ENCODE measurements at regions of chr10 and their contacts with region 1.

Region 1: DNA sequence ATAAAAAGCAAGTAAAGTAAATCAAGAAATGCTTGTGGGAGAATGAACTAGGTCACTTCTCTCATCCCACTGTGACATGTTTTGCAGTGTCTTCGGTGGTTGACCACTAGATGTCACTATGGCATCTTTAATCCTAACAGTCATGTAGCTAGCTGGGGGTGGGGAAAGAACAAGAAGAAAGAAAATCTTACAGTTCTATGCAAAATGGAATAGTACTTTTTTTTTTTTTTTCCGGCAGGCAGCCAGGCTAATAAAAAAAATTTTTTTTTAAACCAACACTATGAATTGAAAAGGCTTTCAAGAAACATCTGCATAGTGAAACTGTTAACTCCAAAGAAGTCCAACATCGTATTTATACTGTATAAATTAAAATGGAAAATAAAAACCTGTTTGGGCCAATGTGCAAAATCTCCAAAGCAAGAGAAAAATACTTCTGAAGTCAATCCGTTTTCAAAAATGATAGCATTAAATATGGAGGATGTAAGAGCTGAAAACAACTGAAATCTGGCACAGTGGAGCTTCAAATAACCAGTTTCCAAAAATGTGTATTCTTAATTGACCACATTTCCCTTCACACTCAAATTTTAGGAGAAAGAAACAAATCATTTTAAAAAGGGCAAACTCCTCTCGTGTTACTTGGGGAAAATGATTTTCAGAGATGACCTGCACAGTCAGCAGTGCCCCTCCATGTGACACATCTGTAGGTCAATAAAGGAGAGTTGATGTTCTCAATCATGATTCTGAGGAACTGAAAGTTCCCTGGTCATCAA is 38.5 kb downstream of the CDK1 start:
- DNase-seq: peak in 4 of 9 experiments; percentile 11 to 71 (median 36)
- ATAC-seq: peak; percentile 55
- H3K4me3 ChIP-seq: no peak overlapping the region
- H3K4me3 Mint-ChIP-seq: no peak overlapping the region
- H3K27ac ChIP-seq: no peak overlapping the region
- H3K27ac Mint-ChIP-seq: no peak overlapping the region
- H3K4me1 ChIP-seq: no peaks in the 10 kb centered on the region
- H3K4me1 Mint-ChIP-seq: no peaks in the 10 kb centered on the region
- H3K27me3 ChIP-seq: no peaks in the 10 kb centered on the region
- H3K27me3 Mint-ChIP-seq: no peaks in the 10 kb centered on the region
- CTCF ChIP-seq: peak; percentile 68

Region 2: DNA sequence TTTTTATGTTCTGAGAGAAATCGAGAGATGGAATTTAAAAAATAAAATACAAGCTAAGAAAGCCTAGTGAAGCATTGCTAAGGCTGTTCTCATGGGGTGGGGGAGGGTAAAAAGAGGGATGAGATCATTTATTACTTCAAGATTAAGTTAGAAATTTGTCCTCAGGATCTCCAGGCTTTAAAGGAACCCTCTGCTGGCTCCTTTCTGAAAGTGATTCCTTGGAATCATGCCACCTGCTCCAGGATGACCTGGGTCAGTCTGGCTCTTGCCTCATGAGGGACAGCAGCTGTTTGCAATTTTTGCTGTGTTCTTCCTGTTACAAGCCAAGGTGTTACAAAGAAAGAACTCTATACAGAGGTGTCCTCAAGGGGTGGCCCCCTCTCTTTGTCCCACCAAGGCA is 31.3 kb after region 1 on chr10:
- CTCF ChIA-PET with region 1: no interaction called
- POLR2A ChIA-PET with region 1: no interaction called
- intact Hi-C with region 1: no loop called
- DNase-seq: no peak
- ATAC-seq: no peak
- H3K4me3 ChIP-seq: no peak overlapping the region
- H3K4me3 Mint-ChIP-seq: no peak overlapping the region
- H3K27ac ChIP-seq: no peak overlapping the region
- H3K27ac Mint-ChIP-seq: no peak overlapping the region
- H3K4me1 ChIP-seq: no peaks in the 10 kb centered on the region
- H3K4me1 Mint-ChIP-seq: no peaks in the 10 kb centered on the region
- H3K27me3 ChIP-seq: no peaks in the 10 kb centered on the region
- H3K27me3 Mint-ChIP-seq: no peaks in the 10 kb centered on the region
- CTCF ChIP-seq: no peak

Region 3: DNA sequence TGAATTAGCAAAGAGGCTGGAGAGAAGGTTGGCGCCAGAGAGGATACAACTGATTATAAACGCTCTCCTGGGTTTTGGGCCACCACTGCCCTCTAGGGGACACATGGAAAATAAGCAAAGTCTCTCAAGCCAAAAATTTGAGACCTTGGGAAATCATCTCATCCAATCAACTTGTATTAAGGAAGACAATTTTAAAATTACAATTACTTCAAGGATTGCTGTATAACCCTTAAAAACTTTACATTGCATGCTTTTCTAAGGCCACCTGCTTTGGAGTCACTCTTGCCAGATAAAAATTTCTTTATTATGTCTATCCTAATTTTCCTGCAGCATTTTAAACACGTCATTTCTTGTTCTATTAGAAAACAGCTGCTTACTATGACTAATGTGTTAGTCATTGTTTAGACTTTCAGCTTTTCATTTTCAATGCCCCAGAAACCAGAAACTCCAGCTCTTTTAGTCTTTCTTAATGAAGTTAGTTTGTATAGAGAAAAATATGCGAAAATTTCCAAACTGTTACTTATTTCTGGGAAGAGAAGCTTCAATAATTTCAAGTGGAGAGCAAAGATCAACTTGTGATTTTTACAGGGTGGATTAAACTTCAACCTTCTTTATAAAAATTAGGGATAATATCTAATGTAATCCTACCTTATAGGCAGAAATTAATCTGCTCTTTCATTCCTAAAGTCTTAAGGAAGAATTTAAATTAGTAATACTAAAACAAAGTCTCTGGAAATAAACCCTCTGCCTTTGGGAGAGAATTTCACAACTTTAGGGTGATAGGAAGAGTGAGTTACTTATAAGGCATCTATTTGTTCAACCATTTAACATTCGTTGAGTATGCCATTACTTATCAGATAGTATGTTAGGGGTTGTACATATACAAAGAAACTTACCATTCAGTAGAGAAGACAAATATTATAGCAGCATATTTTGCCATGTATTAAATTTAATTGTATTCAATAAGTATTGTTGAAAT is 147.7 kb after region 1 on chr10:
- CTCF ChIA-PET with region 1: interaction called, 3 read pairs
- POLR2A ChIA-PET with region 1: no interaction called
- intact Hi-C with region 1: loop called (anchors 1 to 2 kb)
- DNase-seq: peak in 6 of 9 experiments; percentile 20 to 60 (median 40)
- ATAC-seq: peak; percentile 51
- H3K4me3 ChIP-seq: no peak overlapping the region
- H3K4me3 Mint-ChIP-seq: no peak overlapping the region
- H3K27ac ChIP-seq: no peak overlapping the region
- H3K27ac Mint-ChIP-seq: no peak overlapping the region
- H3K4me1 ChIP-seq: no peaks in the 10 kb centered on the region
- H3K4me1 Mint-ChIP-seq: no peaks in the 10 kb centered on the region
- H3K27me3 ChIP-seq: no peaks in the 10 kb centered on the region
- H3K27me3 Mint-ChIP-seq: peaks cover 9% of the 10 kb centered on the region
- CTCF ChIP-seq: peak; percentile 65

Region 4: DNA sequence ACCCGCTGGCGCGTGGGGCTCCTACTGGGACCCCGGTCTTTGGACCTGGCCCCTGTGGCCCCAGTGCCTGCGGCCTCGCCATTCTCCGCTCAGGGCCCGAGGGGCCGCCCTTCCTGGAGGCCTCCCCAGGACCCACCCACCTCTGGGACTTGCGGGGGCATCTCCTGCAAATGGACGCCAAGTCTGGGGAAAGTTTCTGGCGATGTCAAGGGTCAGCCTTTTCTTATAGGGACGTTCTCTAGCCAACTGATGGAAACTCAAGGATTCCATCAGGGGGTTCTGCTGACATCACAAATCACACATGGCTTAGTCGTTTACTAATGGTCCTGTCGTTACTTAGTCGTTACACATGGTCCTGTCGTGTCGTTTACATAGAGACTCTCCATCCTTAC is 184.9 kb after region 1 on chr10:
- CTCF ChIA-PET with region 1: no interaction called
- POLR2A ChIA-PET with region 1: no interaction called
- intact Hi-C with region 1: no loop called
- DNase-seq: no peak
- ATAC-seq: no peak
- H3K4me3 ChIP-seq: no peak overlapping the region
- H3K4me3 Mint-ChIP-seq: no peak overlapping the region
- H3K27ac ChIP-seq: no peak overlapping the region
- H3K27ac Mint-ChIP-seq: no peak overlapping the region
- H3K4me1 ChIP-seq: no peaks in the 10 kb centered on the region
- H3K4me1 Mint-ChIP-seq: peaks cover 5% of the 10 kb centered on the region
- H3K27me3 ChIP-seq: no peaks in the 10 kb centered on the region
- H3K27me3 Mint-ChIP-seq: peaks cover 42% of the 10 kb centered on the region
- CTCF ChIP-seq: no peak

Region 5: DNA sequence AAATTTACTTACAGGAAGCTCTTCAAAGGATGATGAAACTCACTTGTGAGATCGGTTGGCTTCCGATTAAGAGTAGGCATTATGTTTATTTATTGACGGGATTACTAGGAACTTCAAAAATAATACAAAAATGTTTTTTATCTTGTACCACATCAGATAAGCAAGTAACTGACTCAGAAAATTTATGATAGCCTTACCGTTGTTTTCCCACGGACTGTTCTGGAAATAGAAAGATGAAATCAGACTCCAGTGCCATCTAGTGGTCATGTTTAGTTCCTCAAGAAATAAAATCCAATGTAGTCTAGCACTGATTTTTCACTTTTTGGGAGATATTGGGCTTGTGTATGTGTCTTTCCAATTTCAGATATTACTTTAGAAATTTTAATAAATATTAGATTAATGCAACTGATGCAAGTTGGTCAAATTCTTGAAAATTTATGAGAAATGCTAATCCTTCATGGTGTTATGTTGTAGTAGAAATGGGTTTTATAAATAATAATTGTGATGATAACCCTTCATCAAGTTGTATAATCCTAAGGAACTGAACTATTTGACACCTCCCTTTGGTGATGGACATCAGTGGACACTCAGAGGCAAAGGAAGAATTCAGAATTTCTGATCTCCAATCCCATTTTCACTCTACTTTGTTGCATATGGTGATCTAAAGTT is 467.5 kb after region 1 on chr10:
- CTCF ChIA-PET with region 1: no interaction called
- POLR2A ChIA-PET with region 1: no interaction called
- intact Hi-C with region 1: loop called in 1 of 2 experiments (anchors 2 kb)
- DNase-seq: peak in 2 of 9 experiments; percentile 51 to 62
- ATAC-seq: no peak
- H3K4me3 ChIP-seq: no peak overlapping the region
- H3K4me3 Mint-ChIP-seq: peak overlapping the region; percentile 64
- H3K27ac ChIP-seq: no peak overlapping the region
- H3K27ac Mint-ChIP-seq: no peak overlapping the region
- H3K4me1 ChIP-seq: peaks cover 15% of the 10 kb centered on the region
- H3K4me1 Mint-ChIP-seq: peaks cover 24% of the 10 kb centered on the region
- H3K27me3 ChIP-seq: no peaks in the 10 kb centered on the region
- H3K27me3 Mint-ChIP-seq: no peaks in the 10 kb centered on the region
- CTCF ChIP-seq: peak; percentile 92

Region 6: DNA sequence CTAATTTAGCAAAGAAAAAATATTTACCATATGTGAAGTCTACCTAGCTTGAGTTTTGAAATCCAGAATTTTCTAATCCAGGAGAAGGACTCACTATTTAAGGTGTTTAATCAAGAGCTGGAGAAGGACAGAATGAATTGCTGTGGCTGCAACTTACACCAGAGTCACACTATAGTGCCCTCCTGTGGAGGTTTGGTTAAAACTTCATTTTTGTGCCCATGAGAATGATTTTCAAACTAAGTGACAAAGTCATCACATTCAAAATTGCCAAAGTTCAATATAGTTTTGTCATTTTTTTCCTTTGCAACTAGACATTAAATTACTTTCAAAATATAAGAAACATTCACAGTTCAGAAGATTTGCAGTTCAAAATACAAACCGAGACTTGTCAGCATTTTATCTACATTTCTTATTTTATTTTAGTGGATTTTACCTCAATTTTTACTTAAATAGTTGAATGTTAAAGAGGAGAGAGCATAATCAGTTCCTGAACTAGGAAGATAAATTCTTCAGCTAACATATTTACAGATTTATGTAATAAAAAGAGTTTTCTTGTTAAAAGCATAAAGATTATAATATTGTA is 916.6 kb after region 1 on chr10:
- CTCF ChIA-PET with region 1: no interaction called
- POLR2A ChIA-PET with region 1: no interaction called
- intact Hi-C with region 1: loop called (anchors 2 to 10 kb)
- DNase-seq: peak in 2 of 9 experiments; percentile 9 to 34
- ATAC-seq: no peak
- H3K4me3 ChIP-seq: no peak overlapping the region
- H3K4me3 Mint-ChIP-seq: no peak overlapping the region
- H3K27ac ChIP-seq: no peak overlapping the region
- H3K27ac Mint-ChIP-seq: no peak overlapping the region
- H3K4me1 ChIP-seq: no peaks in the 10 kb centered on the region
- H3K4me1 Mint-ChIP-seq: no peaks in the 10 kb centered on the region
- H3K27me3 ChIP-seq: no peaks in the 10 kb centered on the region
- H3K27me3 Mint-ChIP-seq: peaks cover 24% of the 10 kb centered on the region
- CTCF ChIP-seq: peak; percentile 45

Region 7: GRCh38 chr10:61869774-61870525 is 1053.1 kb after region 1 on chr10:
- CTCF ChIA-PET with region 1: no interaction called
- POLR2A ChIA-PET with region 1: no interaction called
- intact Hi-C with region 1: loop called in 1 of 2 experiments (anchors 5 kb)
- DNase-seq: no peak
- ATAC-seq: no peak
- H3K4me3 ChIP-seq: no peak overlapping the region
- H3K4me3 Mint-ChIP-seq: no peak overlapping the region
- H3K27ac ChIP-seq: no peak overlapping the region
- H3K27ac Mint-ChIP-seq: no peak overlapping the region
- H3K4me1 ChIP-seq: no peaks in the 10 kb centered on the region
- H3K4me1 Mint-ChIP-seq: peaks cover 7% of the 10 kb centered on the region
- H3K27me3 ChIP-seq: no peaks in the 10 kb centered on the region
- H3K27me3 Mint-ChIP-seq: peaks cover 2% of the 10 kb centered on the region
- CTCF ChIP-seq: no peak

Measured in CD8-positive, alpha-beta T cell (primary cell).